Gastrocnemius medialis (tissue), 4 donors: ENCODE measurements at regions of chrX and their contacts with region 1.

Region 1: GRCh38 chrX:38999967-39000745 is 198.9 kb downstream of the MID1IP1 start:
- DNase-seq: peak; percentile 25 to 35
- ATAC-seq: peak; percentile 88 to 93
- H3K4me3 ChIP-seq: no peak overlapping the region
- H3K27ac ChIP-seq: peak overlapping the region; percentile 77 to 85 (median 80)
- H3K4me1 ChIP-seq: peaks cover 0 to 15% of the 10 kb centered on the region in 2 donors
- H3K27me3 ChIP-seq: no peaks in the 10 kb centered on the region
- CTCF ChIP-seq: no peak
- POLR2A ChIP-seq: no peak

Region 2: GRCh38 chrX:38919202-38919601 is 81.0 kb before region 1 on chrX:
- in situ Hi-C with region 1: no loop called
- intact Hi-C with region 1: no loop called
- DNase-seq: no peak
- ATAC-seq: no peak
- H3K4me3 ChIP-seq: no peak overlapping the region
- H3K27ac ChIP-seq: no peak overlapping the region
- H3K4me1 ChIP-seq: peaks cover 0 to 11% of the 10 kb centered on the region in 2 donors
- H3K27me3 ChIP-seq: no peaks in the 10 kb centered on the region
- CTCF ChIP-seq: no peak
- POLR2A ChIP-seq: no peak

Region 3: DNA sequence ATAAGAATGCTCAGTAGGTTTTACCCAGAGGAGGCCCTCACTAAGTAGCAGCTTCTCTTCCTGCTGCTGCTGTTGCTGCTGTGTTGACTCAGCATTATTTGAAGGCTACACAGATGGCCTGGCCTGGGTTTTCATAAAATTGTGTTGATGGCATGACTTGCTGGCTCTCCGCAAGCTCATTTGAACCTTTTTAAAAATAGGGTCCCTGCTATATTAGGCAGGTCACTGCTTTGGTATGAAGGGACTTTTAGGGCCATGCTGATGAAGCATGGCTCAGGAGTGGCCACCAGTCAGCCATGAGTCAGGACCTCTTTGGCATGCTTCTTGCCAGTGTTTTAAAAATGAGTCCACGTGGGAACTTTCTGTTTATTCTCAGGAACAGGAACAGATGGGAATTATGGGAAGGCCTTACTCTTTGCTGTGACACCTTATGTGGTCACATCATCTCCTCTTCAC is 70.2 kb before region 1 on chrX:
- in situ Hi-C with region 1: no loop called
- intact Hi-C with region 1: no loop called
- DNase-seq: peak; percentile 43 to 54
- ATAC-seq: peak; percentile 88 to 96
- H3K4me3 ChIP-seq: no peak overlapping the region
- H3K27ac ChIP-seq: peak overlapping the region; percentile 68 to 83 (median 72)
- H3K4me1 ChIP-seq: peaks cover 5 to 11% of the 10 kb centered on the region in 2 donors
- H3K27me3 ChIP-seq: no peaks in the 10 kb centered on the region
- CTCF ChIP-seq: no peak
- POLR2A ChIP-seq: no peak

Region 4: GRCh38 chrX:39065051-39065871 is 65.1 kb after region 1 on chrX:
- in situ Hi-C with region 1: no loop called
- intact Hi-C with region 1: loop called (anchors 2 kb)
- DNase-seq: peak; percentile 46 to 52
- ATAC-seq: peak; percentile 78 to 80
- H3K4me3 ChIP-seq: no peak overlapping the region
- H3K27ac ChIP-seq: peak overlapping the region; percentile 27 to 83 (median 70)
- H3K4me1 ChIP-seq: peaks cover 0 to 15% of the 10 kb centered on the region in 2 donors
- H3K27me3 ChIP-seq: no peaks in the 10 kb centered on the region
- CTCF ChIP-seq: no peak
- POLR2A ChIP-seq: no peak